Activated CD4-positive, alpha-beta T cell treated with anti-CD3 and anti-CD28 coated beads for 36 hours (primary cell): ENCODE measurements at regions of chr15 and their contacts with region 1.

Region 1: DNA sequence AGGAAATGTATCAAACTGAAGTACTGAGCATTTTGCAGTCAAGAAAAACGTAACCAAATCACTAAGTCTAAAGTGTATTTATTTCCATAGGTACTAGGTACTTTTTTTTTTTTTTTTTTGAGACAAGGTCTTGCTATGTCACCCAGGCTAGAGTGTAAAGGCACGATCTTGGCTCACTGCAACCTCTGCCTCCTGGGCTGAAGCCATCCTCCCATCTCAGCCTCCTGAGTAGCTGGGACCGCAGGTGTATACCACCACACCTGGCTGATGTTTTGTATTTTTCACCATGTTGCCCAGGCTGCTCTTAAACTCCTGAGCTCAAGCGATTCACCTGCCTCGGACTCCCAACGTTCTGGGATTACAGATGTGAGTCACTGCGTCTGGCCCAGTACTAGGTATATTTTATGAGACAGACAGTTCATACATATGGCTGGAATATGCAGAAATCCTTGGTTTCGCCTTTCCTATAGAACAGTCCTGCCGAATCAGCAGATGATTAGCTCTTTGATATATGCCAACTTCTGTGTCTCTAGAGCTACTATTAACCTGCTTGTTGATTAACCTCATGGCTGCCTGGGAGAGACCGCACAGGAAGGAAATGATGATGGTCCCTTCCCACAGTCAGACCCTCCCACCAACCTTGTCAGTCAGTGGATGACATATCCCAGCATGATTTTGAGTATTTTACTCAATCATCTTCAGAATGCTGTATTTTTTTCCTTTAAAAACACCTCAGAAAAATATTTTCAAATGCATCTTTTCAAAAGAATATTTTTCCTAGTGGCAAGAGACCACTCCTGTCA is 32.3 kb downstream of the TMOD3 start:
- DNase-seq: peak; percentile 77
- ATAC-seq: peak; percentile 84
- H3K4me3 Mint-ChIP-seq: peak overlapping the region; percentile 51
- H3K27ac Mint-ChIP-seq: peak overlapping the region; percentile 75
- H3K4me1 Mint-ChIP-seq: peaks cover 65% of the 10 kb centered on the region
- H3K27me3 Mint-ChIP-seq: no peaks in the 10 kb centered on the region

Region 2: DNA sequence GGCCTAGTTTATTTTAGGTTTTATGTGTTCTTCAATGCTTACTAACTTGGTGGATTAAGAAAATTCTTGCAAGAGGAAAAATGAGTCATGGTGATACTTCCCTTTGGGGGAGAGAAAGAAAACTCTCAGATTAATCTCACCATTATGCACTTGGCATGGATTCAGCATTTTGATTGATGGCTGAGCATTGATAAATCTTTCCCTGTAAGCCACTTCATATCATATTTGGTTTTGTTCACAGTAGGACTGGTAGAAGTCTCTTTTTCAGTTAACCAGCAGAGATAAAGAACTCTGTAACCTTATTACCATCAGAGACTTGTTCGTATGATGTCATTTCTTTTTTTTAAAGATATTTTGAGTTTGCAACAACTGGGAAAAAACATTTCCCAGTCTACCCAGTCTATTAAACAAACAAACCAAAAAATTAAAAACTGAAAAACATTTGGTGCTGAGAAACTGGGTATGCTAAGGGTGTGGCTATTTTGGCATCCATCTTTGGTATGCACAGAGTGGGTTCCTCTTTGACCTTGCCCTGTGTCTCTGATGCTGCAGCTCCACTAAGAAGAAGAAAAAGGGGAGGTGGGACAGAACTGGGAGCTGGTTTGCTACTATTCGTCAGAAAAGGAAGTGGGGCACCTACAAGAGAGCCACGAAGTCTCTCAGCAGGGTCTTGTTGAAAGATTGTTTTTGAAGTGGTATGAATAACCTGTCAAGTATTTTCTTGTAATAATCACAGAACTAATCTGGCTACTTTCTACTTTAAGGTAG is 15.1 kb before region 1 on chr15:
- CTCF ChIA-PET with region 1: interaction called, 4 read pairs
- POLR2A ChIA-PET with region 1: interaction called, 3 read pairs
- intact Hi-C with region 1: loop called in 1 of 2 experiments (anchors 1 kb)
- DNase-seq: no peak
- ATAC-seq: peak; percentile 30
- H3K4me3 Mint-ChIP-seq: peak overlapping the region; percentile 38
- H3K27ac Mint-ChIP-seq: peak overlapping the region; percentile 71
- H3K4me1 Mint-ChIP-seq: peaks cover 73% of the 10 kb centered on the region
- H3K27me3 Mint-ChIP-seq: no peaks in the 10 kb centered on the region

Region 3: GRCh38 chr15:51971375-51972133 is 109.8 kb after region 1 on chr15 and contains the start of gene LEO1:
- CTCF ChIA-PET with region 1: no interaction called
- POLR2A ChIA-PET with region 1: interaction called, 3 read pairs
- intact Hi-C with region 1: loop called in 1 of 2 experiments (anchors 2 kb)
- DNase-seq: peak; percentile 93
- ATAC-seq: peak; percentile 95
- H3K4me3 Mint-ChIP-seq: peak within 1 kb of the TSS; percentile 100
- H3K27ac Mint-ChIP-seq: peak within 1 kb of the TSS; percentile 94
- H3K4me1 Mint-ChIP-seq: peaks cover 21% of the 10 kb centered on the region
- H3K27me3 Mint-ChIP-seq: no peaks in the 10 kb centered on the region
- total RNA-seq, gene LEO1: 31.4 to 40.0 TPM

Region 4: DNA sequence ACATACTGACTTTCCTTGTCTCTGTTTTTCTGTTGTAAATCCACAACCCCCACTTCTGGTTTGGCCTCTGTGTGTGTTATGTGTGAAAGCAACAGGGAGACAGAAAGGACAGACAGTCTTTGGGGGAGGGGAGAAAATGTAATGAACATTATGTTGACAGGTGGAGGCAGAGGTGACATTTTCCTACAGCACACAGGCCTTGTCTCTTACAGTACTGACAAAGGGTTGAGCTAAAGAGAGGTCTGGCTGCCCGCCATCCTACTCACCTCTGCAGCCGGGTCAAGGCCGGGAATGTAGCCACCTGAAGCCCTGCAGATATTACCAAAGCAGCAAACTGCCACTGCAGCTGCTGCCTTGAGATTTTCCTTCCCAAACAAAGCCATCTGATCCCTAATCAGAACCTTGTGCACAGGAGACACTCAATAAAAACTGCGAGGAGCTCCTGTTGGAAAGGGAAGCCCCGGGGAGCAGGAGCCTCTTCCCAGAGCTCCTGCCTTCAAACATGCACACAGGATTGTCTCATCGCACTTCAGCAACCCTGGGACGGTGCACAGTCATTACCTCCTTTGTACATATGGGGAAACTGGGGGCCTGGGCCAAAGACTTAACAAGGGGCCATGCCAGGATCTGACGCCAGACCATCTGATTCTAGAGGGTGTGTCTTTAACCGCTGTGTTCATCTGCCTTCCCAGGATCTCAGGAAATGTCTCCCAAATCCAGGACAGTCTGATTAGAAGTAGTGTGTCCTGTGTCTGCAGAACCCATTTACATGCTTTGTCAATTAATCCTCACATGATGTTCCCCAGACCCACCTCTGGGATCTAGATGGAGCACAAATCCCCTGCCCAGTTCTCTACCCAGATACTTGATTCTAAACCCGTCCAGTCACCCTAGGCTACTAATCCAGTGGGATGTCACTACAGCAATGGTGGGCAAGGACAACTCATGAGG is 419.6 kb after region 1 on chr15:
- CTCF ChIA-PET with region 1: no interaction called
- POLR2A ChIA-PET with region 1: no interaction called
- intact Hi-C with region 1: no loop called
- DNase-seq: no peak
- ATAC-seq: no peak
- H3K4me3 Mint-ChIP-seq: no peak overlapping the region
- H3K27ac Mint-ChIP-seq: no peak overlapping the region
- H3K4me1 Mint-ChIP-seq: no peaks in the 10 kb centered on the region
- H3K27me3 Mint-ChIP-seq: no peaks in the 10 kb centered on the region